Vagina (tissue), 2 donors: ENCODE measurements at regions of chr19 and their contacts with region 1.

Region 1: GRCh38 chr19:34430738-34431625 is 2.8 kb downstream of the UBA2 start:
- DNase-seq: no peak
- H3K4me3 ChIP-seq: peak overlapping the region in 1 of 2 donors; percentile 1
- H3K27ac ChIP-seq: peak overlapping the region; percentile 88
- H3K4me1 ChIP-seq: peaks cover 51% of the 10 kb centered on the region
- H3K27me3 ChIP-seq: no peaks in the 10 kb centered on the region
- CTCF ChIP-seq: peak in 2 of 3 experiments; percentile 21 to 27
- POLR2A ChIP-seq: no peak

Region 2: DNA sequence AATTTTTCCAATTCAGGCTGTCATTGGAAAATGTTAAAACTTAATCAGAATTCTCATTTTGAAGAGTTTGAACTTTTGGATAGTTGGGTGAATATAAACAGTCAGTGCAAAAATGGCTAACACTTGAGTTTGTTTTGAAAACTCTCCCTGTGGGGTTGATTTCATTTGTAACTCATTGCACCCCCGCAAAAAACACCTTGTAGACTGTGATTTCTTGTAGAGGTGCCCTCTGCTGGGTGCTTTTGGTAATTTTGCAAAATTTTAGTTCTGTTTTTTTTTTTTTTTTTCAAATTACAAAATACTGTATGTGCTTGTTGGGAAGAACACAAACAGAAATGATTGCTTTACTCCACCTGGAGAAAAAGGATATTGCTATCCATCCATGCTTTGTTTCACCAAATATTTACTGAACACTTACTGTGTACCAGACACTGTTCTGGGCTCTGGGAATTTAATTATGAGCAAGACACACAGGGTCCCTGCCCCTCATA is 94.2 kb before region 1 on chr19:
- intact Hi-C with region 1: no loop called
- DNase-seq: no peak
- H3K4me3 ChIP-seq: no peak overlapping the region
- H3K27ac ChIP-seq: no peak overlapping the region
- H3K4me1 ChIP-seq: no peaks in the 10 kb centered on the region
- H3K27me3 ChIP-seq: no peaks in the 10 kb centered on the region
- CTCF ChIP-seq: peak; percentile 15 to 48 (median 48)
- POLR2A ChIP-seq: no peak

Region 3: DNA sequence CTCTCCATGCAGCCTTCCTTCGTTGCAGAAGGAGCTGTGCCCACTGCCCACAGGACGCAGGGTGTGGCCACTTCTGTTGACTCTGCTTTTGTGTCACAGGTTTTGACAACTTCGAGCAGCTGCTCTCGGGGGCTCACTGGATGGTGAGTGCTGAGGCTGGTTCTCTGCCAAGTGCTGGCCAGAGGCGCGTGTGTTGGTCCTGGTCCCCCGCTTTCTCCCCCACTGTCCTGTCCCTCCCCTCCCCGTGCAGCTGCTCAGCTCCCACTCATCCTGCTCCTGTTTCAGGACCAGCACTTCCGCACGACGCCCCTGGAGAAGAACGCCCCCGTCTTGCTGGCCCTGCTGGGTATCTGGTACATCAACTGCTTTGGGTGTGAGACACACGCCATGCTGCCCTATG is 37.4 kb before region 1 on chr19:
- intact Hi-C with region 1: no loop called
- DNase-seq: no peak
- H3K4me3 ChIP-seq: no peak overlapping the region
- H3K27ac ChIP-seq: no peak overlapping the region
- H3K4me1 ChIP-seq: no peaks in the 10 kb centered on the region
- H3K27me3 ChIP-seq: no peaks in the 10 kb centered on the region
- CTCF ChIP-seq: no peak
- POLR2A ChIP-seq: no peak

Region 4: DNA sequence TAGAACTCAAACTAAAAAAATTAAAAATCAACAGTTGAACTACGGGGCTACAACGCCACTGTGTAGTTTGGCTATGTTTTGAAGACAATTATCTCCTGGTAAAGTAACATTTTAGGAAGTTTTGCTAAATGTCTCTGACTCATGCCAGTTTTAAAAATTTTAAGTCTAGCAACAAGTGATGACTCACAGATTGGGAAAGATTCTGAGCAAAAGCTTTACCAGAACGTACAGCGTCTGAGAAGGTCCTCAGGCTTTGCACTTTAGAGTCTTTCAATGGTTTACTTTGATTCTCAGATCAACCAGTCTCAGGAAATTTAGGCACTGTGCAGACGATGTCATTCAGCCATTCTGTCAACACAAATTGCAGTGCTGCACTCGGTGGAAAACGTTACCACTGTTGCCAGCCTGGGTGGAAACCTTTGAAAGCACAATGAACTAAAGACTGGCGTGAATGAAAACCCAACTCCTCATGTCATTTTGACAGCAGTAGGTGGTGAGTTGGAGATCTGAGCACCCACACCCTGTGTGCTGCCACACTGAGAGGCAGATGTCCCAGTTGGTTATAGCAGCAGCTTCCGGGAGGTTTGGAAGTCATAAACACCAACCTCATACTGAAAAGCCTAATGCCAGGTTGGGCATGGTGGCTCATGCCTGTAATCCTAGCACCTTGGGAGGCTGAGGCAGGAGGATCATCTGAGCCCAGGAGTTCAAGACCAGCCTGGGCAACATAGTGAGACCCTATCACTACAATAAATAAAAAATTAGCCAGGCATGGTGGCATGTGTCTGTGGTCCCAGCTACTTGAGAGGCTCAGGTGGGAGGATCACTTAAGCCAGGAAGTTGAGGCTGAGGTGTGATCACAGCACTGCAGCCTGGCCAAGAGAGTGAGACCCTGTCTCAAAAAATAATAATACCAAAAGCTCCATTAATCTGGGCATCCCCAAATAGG is 44.3 kb after region 1 on chr19:
- intact Hi-C with region 1: loop called (anchors 5 kb)
- DNase-seq: peak in 1 of 2 donors; percentile 84
- H3K4me3 ChIP-seq: no peak overlapping the region
- H3K27ac ChIP-seq: peak overlapping the region; percentile 76
- H3K4me1 ChIP-seq: peaks cover 17% of the 10 kb centered on the region
- H3K27me3 ChIP-seq: no peaks in the 10 kb centered on the region
- CTCF ChIP-seq: no peak
- POLR2A ChIP-seq: no peak

Region 5: DNA sequence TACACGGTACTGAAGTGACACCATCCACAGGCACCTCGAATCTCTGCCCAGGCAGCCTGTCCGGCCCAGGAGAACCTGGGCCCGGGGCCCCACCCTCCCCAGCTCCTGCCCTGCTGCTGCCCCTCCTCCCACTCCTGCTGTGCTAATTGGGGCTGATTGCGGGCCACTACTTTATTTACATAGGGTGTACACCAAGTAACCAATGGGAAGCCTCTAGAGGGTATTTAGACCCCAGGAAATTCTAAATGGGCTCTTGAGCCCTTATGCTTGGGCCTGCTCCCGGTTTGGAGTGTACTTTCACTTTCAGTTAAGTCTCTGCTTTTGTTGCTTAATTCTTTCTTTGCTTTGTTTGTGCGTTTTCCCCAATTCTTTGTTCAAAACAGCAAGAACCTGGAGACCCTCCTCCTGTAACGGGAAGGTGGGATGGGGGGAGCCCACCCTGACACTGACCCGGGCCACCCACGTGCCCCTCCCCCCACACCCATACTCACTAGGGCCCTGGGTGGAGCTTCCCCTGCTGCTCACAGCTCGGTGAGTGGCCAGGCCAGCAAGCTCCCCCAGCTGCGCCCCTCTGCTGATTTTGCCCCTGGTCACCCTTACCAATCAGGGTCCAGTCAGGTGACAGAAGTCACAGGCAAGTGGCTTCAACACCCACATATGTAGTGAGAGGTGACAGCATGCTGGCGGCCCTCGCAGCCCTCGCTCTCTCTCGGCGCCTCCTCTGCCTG is 236.5 kb after region 1 on chr19:
- intact Hi-C with region 1: no loop called
- DNase-seq: no peak
- H3K4me3 ChIP-seq: peak overlapping the region; percentile 32 to 40
- H3K27ac ChIP-seq: no peak overlapping the region
- H3K4me1 ChIP-seq: peaks cover 11% of the 10 kb centered on the region
- H3K27me3 ChIP-seq: no peaks in the 10 kb centered on the region
- CTCF ChIP-seq: no peak
- POLR2A ChIP-seq: no peak